Activated B cell treated with CpG ODN at 0.5 μM for 24 hours (primary cell): ENCODE measurements at regions of chr21 and their contacts with region 1.

Region 1: GRCh38 chr21:15729674-15730483 is at the start of gene USP25:
- DNase-seq: peak; percentile 80
- ATAC-seq: peak; percentile 89
- H3K4me3 Mint-ChIP-seq: peak within 1 kb of the TSS; percentile 88
- H3K27ac Mint-ChIP-seq: peak within 1 kb of the TSS; percentile 88
- H3K4me1 Mint-ChIP-seq: peaks cover 39% of the 10 kb centered on the region
- H3K27me3 Mint-ChIP-seq: no peaks in the 10 kb centered on the region
- CTCF ChIP-seq: no peak
- total RNA-seq, gene USP25: 37.2 and 38.3 TPM in 2 replicates

Region 2: DNA sequence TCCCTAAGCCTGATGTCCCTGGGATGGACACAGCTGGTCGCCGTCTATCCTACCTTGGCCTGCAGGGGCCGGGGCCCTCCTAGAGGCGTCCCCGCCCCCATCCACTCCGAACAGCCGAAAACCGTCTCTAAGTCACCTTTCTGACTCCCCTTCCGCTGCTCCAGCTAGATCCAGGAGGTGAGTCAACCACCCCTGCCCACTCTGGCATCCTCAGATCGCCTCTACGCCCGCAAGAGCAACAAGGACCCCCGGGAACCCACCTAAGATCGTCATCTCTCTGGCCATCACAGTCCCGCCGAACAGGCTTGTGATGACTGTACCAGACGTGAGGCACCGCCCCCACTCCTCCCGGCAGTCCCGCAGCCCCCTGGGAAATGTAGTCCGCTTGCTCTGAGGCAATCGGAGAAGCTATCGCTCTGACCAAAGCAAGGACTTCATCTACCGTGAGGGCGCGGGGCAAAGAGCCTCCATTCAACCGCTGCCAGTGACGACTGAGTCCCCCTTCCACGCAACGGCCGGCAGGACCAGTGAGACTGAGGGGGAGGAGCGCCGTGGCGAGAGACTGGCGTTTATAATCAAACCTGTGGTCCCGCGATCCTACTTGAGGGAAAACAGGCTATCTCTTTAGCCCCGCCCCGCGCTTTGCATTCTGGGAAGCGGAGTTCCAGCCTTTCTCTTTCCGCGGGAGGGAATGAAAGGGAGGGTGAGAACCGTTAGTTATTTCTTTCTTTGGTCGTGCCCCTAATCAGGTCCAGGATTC is 1346.9 kb before region 1 on chr21 and contains the start of gene HSPA13:
- CTCF ChIA-PET with region 1: no interaction called
- POLR2A ChIA-PET with region 1: no interaction called
- intact Hi-C with region 1: loop called (anchors 1 kb)
- DNase-seq: peak; percentile 93
- ATAC-seq: peak; percentile 94
- H3K4me3 Mint-ChIP-seq: peak within 1 kb of the TSS; percentile 98
- H3K27ac Mint-ChIP-seq: peak within 1 kb of the TSS; percentile 97
- H3K4me1 Mint-ChIP-seq: peaks cover 37% of the 10 kb centered on the region
- H3K27me3 Mint-ChIP-seq: no peaks in the 10 kb centered on the region
- CTCF ChIP-seq: no peak
- total RNA-seq, gene HSPA13: 17.0 and 17.8 TPM in 2 replicates

Region 3: GRCh38 chr21:14686466-14687267 is 1043.2 kb before region 1 on chr21:
- CTCF ChIA-PET with region 1: no interaction called
- POLR2A ChIA-PET with region 1: no interaction called
- intact Hi-C with region 1: loop called (anchors 5 kb)
- DNase-seq: no peak
- ATAC-seq: peak; percentile 35
- H3K4me3 Mint-ChIP-seq: peak overlapping the region; percentile 30
- H3K27ac Mint-ChIP-seq: peak overlapping the region; percentile 82
- H3K4me1 Mint-ChIP-seq: peaks cover 73% of the 10 kb centered on the region
- H3K27me3 Mint-ChIP-seq: no peaks in the 10 kb centered on the region
- CTCF ChIP-seq: no peak

Region 4: GRCh38 chr21:14877570-14878228 is 852.2 kb before region 1 on chr21:
- CTCF ChIA-PET with region 1: no interaction called
- POLR2A ChIA-PET with region 1: no interaction called
- intact Hi-C with region 1: loop called (anchors 5 kb)
- DNase-seq: no peak
- ATAC-seq: peak; percentile 80
- H3K4me3 Mint-ChIP-seq: no peak overlapping the region
- H3K27ac Mint-ChIP-seq: no peak overlapping the region
- H3K4me1 Mint-ChIP-seq: peaks cover 69% of the 10 kb centered on the region
- H3K27me3 Mint-ChIP-seq: no peaks in the 10 kb centered on the region
- CTCF ChIP-seq: no peak

Region 5: DNA sequence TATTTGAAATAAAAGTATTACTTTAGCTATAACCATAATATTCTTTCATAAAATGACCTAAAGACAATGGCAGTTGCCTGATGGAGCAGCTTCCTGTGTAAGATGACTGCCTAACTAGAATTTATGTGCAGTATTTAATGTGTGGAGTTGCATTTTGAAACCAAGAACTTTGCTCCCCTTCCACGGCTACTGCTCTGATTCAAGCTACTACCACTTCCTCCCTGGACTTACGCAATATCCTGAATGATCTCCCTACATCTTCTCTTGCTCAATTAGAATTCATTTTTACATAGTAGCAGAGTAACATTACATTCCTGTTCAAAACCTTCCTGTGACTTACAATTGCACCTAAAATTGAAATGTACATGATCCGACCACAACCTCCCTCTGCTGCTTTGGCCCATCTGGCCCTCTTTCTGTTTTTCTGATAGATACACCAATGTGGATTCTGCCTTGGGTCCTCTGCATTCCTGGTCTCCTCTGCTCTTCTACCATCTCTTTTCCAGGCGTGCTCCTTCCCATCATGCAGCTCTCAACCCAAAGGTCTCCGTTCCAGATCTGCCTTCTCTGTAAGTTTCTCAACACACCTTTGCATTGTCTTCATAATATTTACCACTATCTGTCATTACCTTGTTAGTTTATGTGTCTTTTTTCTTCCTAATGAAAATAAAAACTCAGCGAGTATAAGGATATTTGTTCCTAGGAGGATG is 47.5 kb before region 1 on chr21:
- CTCF ChIA-PET with region 1: no interaction called
- POLR2A ChIA-PET with region 1: no interaction called
- intact Hi-C with region 1: no loop called
- DNase-seq: no peak
- ATAC-seq: no peak
- H3K4me3 Mint-ChIP-seq: no peak overlapping the region
- H3K27ac Mint-ChIP-seq: no peak overlapping the region
- H3K4me1 Mint-ChIP-seq: no peaks in the 10 kb centered on the region
- H3K27me3 Mint-ChIP-seq: peaks cover 10% of the 10 kb centered on the region
- CTCF ChIP-seq: no peak

Region 6: GRCh38 chr21:15713412-15713811 is 16.5 kb before region 1 on chr21:
- CTCF ChIA-PET with region 1: no interaction called
- POLR2A ChIA-PET with region 1: no interaction called
- intact Hi-C with region 1: no loop called
- DNase-seq: no peak
- ATAC-seq: no peak
- H3K4me3 Mint-ChIP-seq: no peak overlapping the region
- H3K27ac Mint-ChIP-seq: no peak overlapping the region
- H3K4me1 Mint-ChIP-seq: no peaks in the 10 kb centered on the region
- H3K27me3 Mint-ChIP-seq: peaks cover 16% of the 10 kb centered on the region
- CTCF ChIP-seq: no peak

Region 7: DNA sequence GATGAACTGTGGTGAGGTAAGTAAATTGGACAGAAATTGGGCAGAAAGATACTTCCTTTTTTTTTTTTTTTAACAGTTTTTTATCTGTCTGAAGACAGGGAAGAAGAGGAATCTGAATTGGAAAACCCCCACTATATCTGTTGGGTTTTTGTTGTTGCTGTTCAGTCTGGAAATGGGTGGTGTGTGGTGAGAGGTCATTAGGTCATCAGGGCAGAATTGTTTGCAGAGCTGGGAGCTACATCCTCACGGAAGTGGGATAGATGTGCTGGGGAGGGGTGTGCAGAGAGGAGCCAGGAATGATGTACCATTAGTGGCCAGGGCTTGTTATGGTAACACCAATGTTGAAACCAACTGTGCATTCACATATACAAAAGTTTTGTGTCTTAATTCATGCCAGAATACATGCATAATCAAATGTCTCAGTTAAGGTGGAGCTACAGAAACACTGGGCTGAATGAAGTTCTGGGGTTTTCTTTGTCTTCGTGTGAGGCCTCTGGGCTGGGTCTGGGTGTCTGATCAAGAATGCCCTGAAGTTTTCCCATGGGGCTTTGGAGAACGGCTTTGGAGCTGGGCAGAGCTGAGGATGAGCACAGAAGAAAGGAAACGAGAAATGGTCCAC is 12.3 kb after region 1 on chr21:
- CTCF ChIA-PET with region 1: no interaction called
- POLR2A ChIA-PET with region 1: no interaction called
- intact Hi-C with region 1: loop called (anchors 2 kb)
- DNase-seq: no peak
- ATAC-seq: no peak
- H3K4me3 Mint-ChIP-seq: peak overlapping the region; percentile 21
- H3K27ac Mint-ChIP-seq: peak overlapping the region; percentile 53
- H3K4me1 Mint-ChIP-seq: peaks cover 65% of the 10 kb centered on the region
- H3K27me3 Mint-ChIP-seq: no peaks in the 10 kb centered on the region
- CTCF ChIP-seq: no peak

Region 8: GRCh38 chr21:15820852-15821379 is 91.0 kb after region 1 on chr21:
- CTCF ChIA-PET with region 1: no interaction called
- POLR2A ChIA-PET with region 1: no interaction called
- intact Hi-C with region 1: loop called (anchors 5 kb)
- DNase-seq: no peak
- ATAC-seq: no peak
- H3K4me3 Mint-ChIP-seq: no peak overlapping the region
- H3K27ac Mint-ChIP-seq: no peak overlapping the region
- H3K4me1 Mint-ChIP-seq: no peaks in the 10 kb centered on the region
- H3K27me3 Mint-ChIP-seq: no peaks in the 10 kb centered on the region
- CTCF ChIP-seq: no peak

Region 9: GRCh38 chr21:17611414-17612022 is 1881.6 kb after region 1 on chr21:
- CTCF ChIA-PET with region 1: no interaction called
- POLR2A ChIA-PET with region 1: no interaction called
- intact Hi-C with region 1: loop called (anchors 5 kb)
- DNase-seq: peak; percentile 62
- ATAC-seq: peak; percentile 47
- H3K4me3 Mint-ChIP-seq: peak overlapping the region; percentile 93
- H3K27ac Mint-ChIP-seq: peak overlapping the region; percentile 94
- H3K4me1 Mint-ChIP-seq: peaks cover 18% of the 10 kb centered on the region
- H3K27me3 Mint-ChIP-seq: no peaks in the 10 kb centered on the region
- CTCF ChIP-seq: no peak